ENCODE measurements at regions of chr1 and their contacts with region 1.

Region 1: DNA sequence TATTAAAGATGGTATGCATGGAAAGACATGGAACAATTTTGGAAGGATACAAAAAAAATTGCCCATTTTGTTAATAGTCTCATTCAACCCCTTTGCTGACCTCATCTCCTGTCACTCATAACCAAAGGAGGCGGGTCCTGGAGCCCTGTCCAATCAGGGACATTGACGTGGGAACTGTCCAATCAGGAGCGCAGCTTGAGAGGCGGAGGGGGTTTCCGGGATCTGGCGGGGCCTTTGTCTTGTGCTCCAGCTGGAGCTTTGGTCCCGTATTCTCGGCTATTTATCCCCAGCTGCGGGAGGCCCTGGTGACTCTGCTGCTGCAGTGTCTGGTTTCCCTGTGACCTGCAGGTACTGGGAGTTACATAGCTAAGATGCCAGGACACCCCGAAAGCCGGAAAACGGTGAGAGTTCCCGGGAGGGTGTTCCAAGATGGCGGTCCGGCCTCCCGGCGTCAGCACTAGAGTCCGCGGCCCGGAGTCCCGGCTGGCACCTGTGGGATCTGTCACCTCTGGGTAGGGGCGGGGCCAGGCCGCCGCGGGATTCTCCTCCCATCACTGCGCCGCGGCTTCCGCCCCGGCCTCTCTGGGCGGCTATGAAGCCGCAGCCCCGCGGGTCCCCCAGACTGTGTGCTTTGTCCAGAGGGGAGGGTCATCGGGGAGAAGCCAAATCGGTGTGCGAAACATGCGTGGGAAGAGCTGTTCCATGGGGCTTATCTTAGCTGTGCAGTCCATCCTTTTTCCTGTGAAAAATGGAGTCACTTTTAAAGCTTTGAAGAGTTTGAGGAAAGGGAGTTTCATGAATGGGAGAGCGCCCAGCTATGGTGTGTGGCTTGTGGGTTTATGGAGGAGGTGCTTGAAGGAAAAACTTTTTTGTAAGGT is at the start of gene ZNF678:
- DNase-seq: peak; percentile 98

Region 2: DNA sequence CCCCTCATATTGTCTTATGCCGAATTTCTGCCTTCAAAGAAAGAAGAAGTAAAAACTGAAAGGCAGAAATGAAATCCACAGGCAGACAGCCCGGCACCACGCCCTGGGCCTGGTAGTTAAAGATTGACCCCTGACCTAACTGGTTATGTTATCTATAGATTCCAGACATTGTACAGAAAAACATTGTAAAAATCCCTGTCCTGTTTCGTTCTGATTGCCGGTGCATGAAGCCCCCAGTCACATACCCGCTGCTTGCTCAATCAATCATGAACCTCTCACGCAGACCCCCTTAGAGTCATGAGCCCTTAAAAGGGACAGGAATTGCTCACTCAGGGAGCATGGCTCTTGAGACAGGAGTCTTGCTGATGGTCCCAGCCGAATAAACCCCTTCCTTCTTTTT is 122.2 kb after region 1 on chr1:
- in situ Hi-C with region 1: loop called (anchors 25 kb)
- DNase-seq: no peak

Region 3: GRCh38 chr1:227778401-227778947 is 214.9 kb after region 1 on chr1:
- in situ Hi-C with region 1: no loop called
- DNase-seq: no peak

Measured in ACHN (cell line).